Mammary epithelial cell (primary cell): ENCODE measurements at regions of chr7 and their contacts with region 1.

Region 1: DNA sequence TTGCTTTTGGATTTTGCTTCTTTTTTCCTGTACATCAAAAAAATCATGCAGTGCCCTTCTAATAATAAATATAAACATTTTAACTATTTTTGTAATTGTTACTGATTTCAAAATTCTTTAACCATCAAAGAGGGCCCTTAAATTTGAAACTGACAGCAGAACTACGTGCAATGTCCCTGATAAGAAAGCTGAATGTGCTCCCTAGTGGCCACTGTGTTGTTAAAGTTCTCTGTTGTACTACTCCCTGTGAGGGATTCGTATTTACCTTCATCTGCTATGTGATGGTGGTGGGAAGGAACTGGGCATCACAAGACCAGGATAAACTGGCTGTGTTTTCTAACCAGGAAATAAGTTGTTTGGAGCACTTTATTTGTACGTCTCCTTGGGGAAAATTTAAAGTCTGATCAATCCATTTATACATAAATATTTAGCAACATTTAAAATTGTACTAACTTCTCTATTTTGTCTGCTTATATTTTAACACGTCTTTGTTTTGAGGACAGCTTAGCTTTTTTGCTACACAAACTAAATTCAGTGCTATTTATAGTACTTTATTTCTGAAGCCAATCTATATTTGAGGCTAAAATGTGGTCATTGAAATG is 322.4 kb downstream of the HGF start:
- DNase-seq: peak; percentile 66
- H3K4me3 ChIP-seq: no peak overlapping the region
- H3K27ac ChIP-seq: no peak overlapping the region
- H3K4me1 ChIP-seq: no peaks in the 10 kb centered on the region
- H3K27me3 ChIP-seq: no peaks in the 10 kb centered on the region
- CTCF ChIP-seq: peak; percentile 62 to 69

Region 2: GRCh38 chr7:81150951-81151361 is 296.5 kb before region 1 on chr7:
- CTCF ChIA-PET with region 1: no interaction called
- dilution Hi-C with region 1: no loop called
- in situ Hi-C with region 1: no loop called
- intact Hi-C with region 1: loop called (anchors 10 kb)
- DNase-seq: peak; percentile 32
- H3K4me3 ChIP-seq: no peak overlapping the region
- H3K27ac ChIP-seq: no peak overlapping the region
- H3K4me1 ChIP-seq: peaks cover 10% of the 10 kb centered on the region
- H3K27me3 ChIP-seq: no peaks in the 10 kb centered on the region
- CTCF ChIP-seq: no peak

Region 3: DNA sequence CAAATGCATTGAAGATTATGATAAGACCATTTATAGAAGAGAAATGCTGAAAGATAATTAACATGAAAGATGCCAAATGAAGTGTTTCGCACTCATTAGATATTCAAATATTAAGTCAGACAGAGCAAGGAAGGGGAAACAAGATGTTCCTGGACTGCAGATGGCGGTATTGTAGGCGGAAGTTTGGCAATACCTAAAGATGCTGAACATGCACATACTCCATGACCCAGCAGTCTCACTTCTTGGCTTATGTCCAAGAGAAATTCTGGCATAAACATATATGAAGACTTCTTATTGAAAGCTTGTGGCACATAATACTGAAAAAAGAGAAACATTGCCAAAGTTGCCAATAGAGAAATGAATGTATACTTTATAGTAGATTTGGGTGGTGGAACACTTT is 203.2 kb before region 1 on chr7:
- CTCF ChIA-PET with region 1: no interaction called
- dilution Hi-C with region 1: no loop called
- in situ Hi-C with region 1: no loop called
- intact Hi-C with region 1: loop called (anchors 2 kb)
- DNase-seq: no peak
- H3K4me3 ChIP-seq: no peak overlapping the region
- H3K27ac ChIP-seq: no peak overlapping the region
- H3K4me1 ChIP-seq: peaks cover 4% of the 10 kb centered on the region
- H3K27me3 ChIP-seq: no peaks in the 10 kb centered on the region
- CTCF ChIP-seq: no peak

Region 4: DNA sequence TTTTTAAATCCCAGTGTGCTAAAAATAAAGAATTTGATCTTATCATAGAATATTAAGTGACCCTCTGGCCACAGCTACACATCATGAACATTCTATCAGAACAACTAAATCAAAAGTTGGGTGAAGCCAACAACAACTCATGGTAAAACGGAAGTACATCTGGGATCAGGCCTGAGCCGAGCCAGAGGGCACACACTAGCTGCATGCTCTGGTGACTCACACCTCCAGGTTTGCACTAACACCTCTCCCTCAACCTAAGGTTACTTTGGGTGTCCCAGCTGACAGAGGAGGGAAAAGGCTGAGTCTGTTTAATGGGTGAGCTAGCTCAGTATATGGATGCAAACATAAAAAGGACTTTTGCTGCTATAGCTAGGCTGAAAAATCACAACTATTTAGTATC is 40.8 kb after region 1 on chr7:
- CTCF ChIA-PET with region 1: no interaction called
- dilution Hi-C with region 1: no loop called
- in situ Hi-C with region 1: no loop called
- intact Hi-C with region 1: no loop called
- DNase-seq: peak; percentile 46
- H3K4me3 ChIP-seq: no peak overlapping the region
- H3K27ac ChIP-seq: no peak overlapping the region
- H3K4me1 ChIP-seq: no peaks in the 10 kb centered on the region
- H3K27me3 ChIP-seq: no peaks in the 10 kb centered on the region
- CTCF ChIP-seq: no peak

Region 5: DNA sequence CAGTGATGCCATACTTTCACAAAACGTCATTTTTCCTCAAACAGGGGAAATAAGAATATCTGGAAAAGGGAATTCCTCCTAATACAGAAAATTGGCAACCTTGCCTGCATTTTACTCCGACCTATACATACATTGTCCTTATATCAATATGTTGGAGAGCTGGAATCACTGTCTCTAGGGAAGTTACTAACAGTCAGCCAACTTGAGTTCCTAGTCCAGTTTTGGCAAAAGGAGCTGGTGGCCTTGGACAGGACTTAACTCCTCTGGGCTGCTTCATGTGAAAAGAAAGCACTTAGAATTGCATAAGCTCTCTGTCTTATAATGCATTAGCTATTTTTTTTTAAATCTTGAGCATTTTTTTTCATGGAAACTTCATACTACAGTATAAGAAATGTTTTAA is 496.6 kb after region 1 on chr7:
- CTCF ChIA-PET with region 1: no interaction called
- dilution Hi-C with region 1: no loop called
- in situ Hi-C with region 1: no loop called
- intact Hi-C with region 1: no loop called
- DNase-seq: no peak
- H3K4me3 ChIP-seq: no peak overlapping the region
- H3K27ac ChIP-seq: no peak overlapping the region
- H3K4me1 ChIP-seq: no peaks in the 10 kb centered on the region
- H3K27me3 ChIP-seq: peaks cover 3% of the 10 kb centered on the region
- CTCF ChIP-seq: no peak